Heart right ventricle (tissue), 16 donors: ENCODE measurements at regions of chr10 and their contacts with region 1.

Region 1: DNA sequence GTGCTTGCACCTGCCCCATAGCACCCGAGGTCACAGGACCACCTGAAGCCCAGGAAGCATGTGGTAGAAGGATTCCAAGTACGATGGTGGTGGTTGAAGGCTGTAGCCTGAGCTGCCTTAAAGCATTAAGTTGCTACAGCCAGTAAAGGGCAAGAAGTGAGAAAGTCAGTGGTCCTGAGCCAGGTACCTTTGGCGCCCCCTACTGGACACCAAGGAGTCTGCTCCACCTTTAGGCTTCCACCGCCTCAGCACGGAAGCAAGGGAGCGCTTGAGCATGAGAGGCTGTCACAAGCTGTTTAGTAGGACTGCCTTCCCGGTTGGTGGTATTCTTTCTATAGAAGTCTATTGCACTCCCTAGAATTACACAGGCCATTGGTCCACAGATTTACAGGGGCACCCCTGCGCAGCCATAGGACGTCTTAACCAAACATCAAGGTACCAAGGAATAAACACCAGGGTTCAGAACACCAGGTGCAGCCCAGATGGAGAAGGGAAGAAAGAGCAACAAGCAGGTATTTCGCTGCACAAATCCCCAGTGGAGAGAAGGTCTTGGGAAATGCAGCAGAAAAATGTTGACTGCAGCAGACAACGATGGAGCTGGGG is 2.2 kb downstream of the CRTAC1 start:
- DNase-seq: peak; percentile 24 to 53
- ATAC-seq: peak in 6 of 8 donors; percentile 46 to 76 (median 54)
- H3K4me3 ChIP-seq: no peak overlapping the region
- H3K27ac ChIP-seq: no peak overlapping the region
- H3K4me1 ChIP-seq: peaks cover 9 to 20% (median 13%) of the 10 kb centered on the region in 9 donors
- H3K27me3 ChIP-seq: peaks cover 7 to 89% (median 66%) of the 10 kb centered on the region in 7 donors
- CTCF ChIP-seq: peak; percentile 61 to 86 (median 76)

Region 2: GRCh38 chr10:97759158-97759887 is 268.9 kb before region 1 on chr10:
- intact Hi-C with region 1: loop called in 1 of 10 experiments (anchors 10 kb)
- DNase-seq: peak; percentile 53 to 65
- ATAC-seq: peak; percentile 75 to 93 (median 78)
- H3K4me3 ChIP-seq: no peak overlapping the region
- H3K27ac ChIP-seq: no peak overlapping the region
- H3K4me1 ChIP-seq: peaks cover 0 to 12% (median 0%) of the 10 kb centered on the region in 9 donors
- H3K27me3 ChIP-seq: no peaks in the 10 kb centered on the region
- CTCF ChIP-seq: peak; percentile 73 to 91 (median 88)

Region 3: DNA sequence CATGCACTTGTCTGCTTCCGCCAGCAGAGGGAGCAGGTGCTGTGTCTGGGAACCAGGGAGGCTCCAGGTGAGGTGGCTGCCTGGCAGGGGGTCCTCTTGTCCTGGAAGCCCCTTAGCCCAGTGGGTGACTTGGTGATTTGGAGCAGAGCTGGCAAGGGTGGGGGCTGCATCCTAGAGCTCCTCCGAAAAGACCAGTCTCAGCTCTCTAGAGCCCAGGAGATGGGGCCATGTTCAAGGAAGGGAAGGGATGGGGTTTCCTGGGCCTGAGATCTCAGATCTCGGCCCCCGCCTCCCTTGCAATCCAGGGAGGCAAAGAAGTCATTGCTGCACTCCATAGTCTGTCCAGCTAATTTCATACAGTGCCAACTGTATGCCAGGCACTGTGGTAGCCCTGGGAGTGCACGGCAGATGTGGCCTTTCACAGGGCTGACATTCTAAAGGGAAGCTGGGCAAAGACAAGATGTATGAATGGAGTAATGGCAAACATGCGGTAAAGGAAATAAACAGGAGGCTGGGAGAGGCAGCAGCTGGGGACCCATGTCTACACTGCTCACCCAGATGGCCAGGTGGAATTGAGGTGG is 236.0 kb before region 1 on chr10:
- intact Hi-C with region 1: loop called in 1 of 10 experiments (anchors 5 kb)
- DNase-seq: peak; percentile 60 to 63
- ATAC-seq: peak in 3 of 8 donors; percentile 30 to 70 (median 59)
- H3K4me3 ChIP-seq: no peak overlapping the region
- H3K27ac ChIP-seq: no peak overlapping the region
- H3K4me1 ChIP-seq: peaks cover 4 to 17% (median 10%) of the 10 kb centered on the region in 9 donors
- H3K27me3 ChIP-seq: peaks cover 0 to 23% (median 9%) of the 10 kb centered on the region in 7 donors
- CTCF ChIP-seq: peak in 8 of 9 donors; percentile 74 to 93 (median 88)

Region 4: DNA sequence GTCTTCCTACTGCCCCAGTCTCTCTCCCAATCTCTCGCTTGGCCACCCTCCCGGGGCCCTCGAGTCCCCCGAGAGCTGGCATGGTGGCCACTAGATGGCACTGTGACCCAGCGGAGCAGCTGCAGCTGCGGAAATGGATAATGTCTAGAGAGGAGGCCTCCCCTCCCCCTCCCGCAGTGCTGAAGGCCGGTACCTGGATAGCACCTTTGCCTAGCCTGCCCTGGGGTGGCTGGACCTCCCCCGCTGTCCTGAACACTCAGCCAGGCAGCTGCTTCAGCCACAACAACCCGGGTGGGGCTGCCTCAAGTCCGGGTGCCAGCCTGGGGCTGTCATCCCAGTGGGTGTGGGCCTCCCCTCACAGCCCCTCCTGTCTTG is 113.4 kb before region 1 on chr10:
- intact Hi-C with region 1: loop called in 3 of 10 experiments (anchors 5 kb)
- DNase-seq: peak; percentile 69 to 80
- ATAC-seq: peak; percentile 77 to 90 (median 86)
- H3K4me3 ChIP-seq: no peak overlapping the region
- H3K27ac ChIP-seq: no peak overlapping the region
- H3K4me1 ChIP-seq: peaks cover 0 to 21% (median 9%) of the 10 kb centered on the region in 9 donors
- H3K27me3 ChIP-seq: peaks cover 0 to 8% (median 4%) of the 10 kb centered on the region in 7 donors
- CTCF ChIP-seq: peak; percentile 88 to 95 (median 90)

Region 5: GRCh38 chr10:97921581-97922021 is 106.7 kb before region 1 on chr10:
- intact Hi-C with region 1: loop called in 3 of 10 experiments (anchors 5 kb)
- DNase-seq: peak; percentile 39 to 55
- ATAC-seq: peak; percentile 36 to 88 (median 82)
- H3K4me3 ChIP-seq: no peak overlapping the region
- H3K27ac ChIP-seq: peak overlapping the region in 7 of 10 donors; percentile 25 to 74 (median 55)
- H3K4me1 ChIP-seq: peaks cover 0 to 26% (median 13%) of the 10 kb centered on the region in 9 donors
- H3K27me3 ChIP-seq: peaks cover 0 to 25% (median 0%) of the 10 kb centered on the region in 7 donors
- CTCF ChIP-seq: no peak